Activated CD4-positive, alpha-beta T cell treated with anti-CD3 and anti-CD28 coated beads, Interleukin-2, amount 10 ng/mL, durations not matched to agents 7 days and 5 days (primary cell): ENCODE measurements at regions of chr7 and their contacts with region 1.

Region 1: GRCh38 chr7:110929480-110930249 is 161.3 kb upstream of the LRRN3 start:
- DNase-seq: no peak
- H3K4me3 Mint-ChIP-seq: no peak overlapping the region
- H3K27ac Mint-ChIP-seq: no peak overlapping the region
- H3K4me1 Mint-ChIP-seq: peaks cover 12% of the 10 kb centered on the region
- H3K27me3 Mint-ChIP-seq: peaks cover 5% of the 10 kb centered on the region

Region 2: GRCh38 chr7:110918949-110919548 is 10.6 kb before region 1 on chr7:
- CTCF ChIA-PET with region 1: interaction called, 11 read pairs
- POLR2A ChIA-PET with region 1: no interaction called
- DNase-seq: no peak
- H3K4me3 Mint-ChIP-seq: no peak overlapping the region
- H3K27ac Mint-ChIP-seq: no peak overlapping the region
- H3K4me1 Mint-ChIP-seq: peaks cover 26% of the 10 kb centered on the region
- H3K27me3 Mint-ChIP-seq: no peaks in the 10 kb centered on the region